ENCODE measurements at regions of chr10 and their contacts with region 1.

Region 1: DNA sequence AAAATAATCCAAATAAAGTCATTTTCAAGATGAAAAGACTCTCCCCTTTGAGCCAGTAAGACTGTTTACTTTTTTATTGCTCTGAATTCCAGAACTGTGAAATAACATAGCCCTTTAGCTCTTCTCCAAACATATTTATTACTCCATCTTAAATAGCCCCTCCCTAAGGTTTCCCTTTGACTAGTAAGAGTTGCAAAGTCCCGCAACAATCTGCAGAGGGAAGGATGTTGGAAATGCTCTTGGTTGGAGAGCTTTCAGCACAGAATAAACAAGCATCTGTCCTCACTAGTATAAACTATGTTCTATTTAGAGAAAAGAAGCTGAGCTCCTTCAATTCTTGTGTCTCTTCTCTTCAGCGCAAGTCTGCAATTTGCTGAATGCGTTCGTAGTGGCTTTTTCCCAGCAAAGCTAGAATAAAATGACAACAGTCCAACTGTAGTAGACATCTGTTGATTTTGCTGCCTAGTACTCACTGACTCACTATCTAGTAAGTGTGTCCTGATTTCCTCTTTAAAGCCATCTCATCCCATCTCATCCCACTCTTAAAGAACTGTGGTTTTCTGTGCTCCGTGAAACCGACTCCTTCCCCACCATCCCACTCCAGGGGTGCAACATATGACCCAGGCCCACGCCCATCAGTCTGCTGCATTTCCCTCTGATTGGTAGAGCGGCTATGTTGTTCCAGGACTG is 104.0 kb downstream of the FAM107B start:
- DNase-seq: peak; percentile 76
- H3K4me3 ChIP-seq: peak overlapping the region; percentile 5; the same call in 1 of the 2 replicates
- H3K27me3 ChIP-seq: no peaks in the 10 kb centered on the region
- CTCF ChIP-seq: no peak

Region 2: GRCh38 chr10:14604181-14605142 is 66.2 kb before region 1 on chr10:
- CTCF ChIA-PET with region 1: no interaction called
- POLR2A ChIA-PET with region 1: no interaction called
- DNase-seq: no peak
- H3K4me3 ChIP-seq: peak overlapping the region; percentile 58
- H3K27me3 ChIP-seq: no peaks in the 10 kb centered on the region
- CTCF ChIP-seq: no peak

Region 3: DNA sequence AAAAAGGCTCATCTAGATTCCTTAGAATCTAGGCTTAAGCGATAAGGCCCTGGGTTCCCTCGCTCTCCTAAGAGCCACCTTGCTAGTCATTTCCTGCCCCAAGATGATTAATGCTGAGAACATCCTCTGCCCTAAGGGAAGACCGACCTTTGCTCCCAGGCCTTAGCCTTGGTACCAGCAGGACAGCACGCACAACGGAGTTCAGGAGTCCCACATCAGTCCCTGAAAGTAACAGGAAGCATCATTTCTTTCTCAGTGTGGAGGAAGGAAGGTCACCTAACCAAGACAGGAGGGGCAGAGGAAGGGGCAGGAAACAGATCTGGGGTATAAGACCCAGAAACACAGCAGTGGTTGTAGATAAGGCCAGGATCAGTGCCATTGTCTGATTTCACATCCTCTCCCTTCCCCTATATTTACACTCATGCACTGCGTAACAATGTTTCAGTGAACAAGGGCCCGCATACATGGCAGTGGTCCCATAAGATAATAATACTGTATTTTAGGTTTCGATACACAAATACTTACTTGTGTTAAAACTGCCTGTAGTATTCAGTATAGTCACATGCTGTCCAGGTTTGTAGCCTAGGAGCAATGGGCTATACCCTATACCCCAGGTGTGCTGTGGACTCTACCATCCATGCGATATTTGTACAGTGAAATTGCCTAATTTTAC is 112.1 kb after region 1 on chr10:
- CTCF ChIA-PET with region 1: no interaction called
- POLR2A ChIA-PET with region 1: interaction called, 21 read pairs
- DNase-seq: no peak
- H3K4me3 ChIP-seq: no peak overlapping the region
- H3K27me3 ChIP-seq: no peaks in the 10 kb centered on the region
- CTCF ChIP-seq: no peak

Measured in BJ (cell line).